Tibial artery (tissue), 4 donors: ENCODE measurements at regions of chr3 and their contacts with region 1.

Region 1: DNA sequence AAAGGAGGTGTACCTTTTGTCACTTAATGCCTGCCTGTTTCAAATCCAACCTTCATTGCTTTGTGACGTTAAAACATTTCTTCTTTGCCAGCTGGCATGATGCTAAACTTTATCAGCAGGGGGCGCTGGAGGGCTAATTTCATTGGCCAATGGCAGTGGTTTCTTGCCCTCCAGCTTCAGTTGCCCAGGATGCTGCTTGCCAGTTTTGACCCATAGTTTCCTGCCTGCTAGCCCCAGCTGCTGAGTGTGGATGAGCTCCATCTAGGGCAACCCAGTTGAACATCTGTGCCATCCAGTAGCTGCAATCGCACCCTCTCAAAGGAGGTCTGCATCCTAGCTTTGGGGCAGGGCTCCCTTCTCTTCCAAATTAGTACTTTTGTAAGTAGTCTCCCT is 22.1 kb downstream of the ACKR2 start:
- DNase-seq: peak; percentile 72 to 84
- H3K4me3 ChIP-seq: no peak overlapping the region
- H3K27ac ChIP-seq: peak overlapping the region in 1 of 2 donors; percentile 19
- H3K4me1 ChIP-seq: peaks cover 0 to 10% (median 2%) of the 10 kb centered on the region in 4 donors
- H3K27me3 ChIP-seq: no peaks in the 10 kb centered on the region
- CTCF ChIP-seq: peak; percentile 78 to 89

Region 2: GRCh38 chr3:42880601-42881451 is 49.5 kb after region 1 on chr3:
- intact Hi-C with region 1: loop called (anchors 5 kb)
- DNase-seq: peak; percentile 84 to 91
- H3K4me3 ChIP-seq: peak overlapping the region; percentile 65 to 66
- H3K27ac ChIP-seq: peak overlapping the region; percentile 77 to 84
- H3K4me1 ChIP-seq: peaks cover 0 to 11% (median 5%) of the 10 kb centered on the region in 4 donors
- H3K27me3 ChIP-seq: no peaks in the 10 kb centered on the region
- CTCF ChIP-seq: peak; percentile 95 to 96

Region 3: DNA sequence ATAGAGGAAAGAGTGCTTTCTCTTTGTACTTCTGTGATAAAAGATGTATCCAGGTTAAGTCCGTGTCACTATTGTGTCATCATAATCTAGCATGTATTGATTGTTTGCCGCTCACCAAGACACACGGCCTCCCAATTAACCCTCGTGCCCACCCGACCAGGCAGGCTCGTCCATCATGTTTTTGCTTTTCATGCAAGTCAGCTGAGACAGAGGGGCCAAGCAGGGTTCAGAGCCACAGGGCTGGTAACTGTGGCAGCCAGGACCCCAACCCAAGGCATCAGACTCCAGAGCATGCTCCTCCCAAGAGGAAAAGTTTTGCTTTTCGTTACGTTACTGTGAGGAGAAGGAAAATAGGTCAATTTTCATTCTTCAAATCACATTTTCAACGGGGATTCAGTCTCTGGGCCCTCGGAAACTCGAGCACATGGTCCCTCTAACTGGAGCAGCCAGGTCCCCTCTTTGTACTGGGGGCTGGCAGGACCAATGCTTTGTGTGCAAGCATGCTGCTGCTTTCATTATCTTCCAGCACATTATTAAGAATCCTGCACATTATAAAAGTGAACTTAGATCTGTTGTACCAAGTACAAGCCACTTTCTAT is 1249.3 kb after region 1 on chr3:
- intact Hi-C with region 1: no loop called
- DNase-seq: no peak
- H3K4me3 ChIP-seq: no peak overlapping the region
- H3K27ac ChIP-seq: no peak overlapping the region
- H3K4me1 ChIP-seq: no peaks in the 10 kb centered on the region
- H3K27me3 ChIP-seq: no peaks in the 10 kb centered on the region
- CTCF ChIP-seq: no peak